ENCODE measurements at regions of chr19 and their contacts with region 1.

Region 1: GRCh38 chr19:8307965-8308866 is at the start of gene CD320:
- DNase-seq: peak; percentile 84
- H3K4me3 Mint-ChIP-seq: peak within 1 kb of the TSS; percentile 89
- H3K27ac Mint-ChIP-seq: peak within 1 kb of the TSS; percentile 81
- H3K4me1 Mint-ChIP-seq: peaks cover 31% of the 10 kb centered on the region
- H3K27me3 Mint-ChIP-seq: no peaks in the 10 kb centered on the region
- total RNA-seq, gene CD320: 122 and 126 TPM in 2 replicates

Region 2: DNA sequence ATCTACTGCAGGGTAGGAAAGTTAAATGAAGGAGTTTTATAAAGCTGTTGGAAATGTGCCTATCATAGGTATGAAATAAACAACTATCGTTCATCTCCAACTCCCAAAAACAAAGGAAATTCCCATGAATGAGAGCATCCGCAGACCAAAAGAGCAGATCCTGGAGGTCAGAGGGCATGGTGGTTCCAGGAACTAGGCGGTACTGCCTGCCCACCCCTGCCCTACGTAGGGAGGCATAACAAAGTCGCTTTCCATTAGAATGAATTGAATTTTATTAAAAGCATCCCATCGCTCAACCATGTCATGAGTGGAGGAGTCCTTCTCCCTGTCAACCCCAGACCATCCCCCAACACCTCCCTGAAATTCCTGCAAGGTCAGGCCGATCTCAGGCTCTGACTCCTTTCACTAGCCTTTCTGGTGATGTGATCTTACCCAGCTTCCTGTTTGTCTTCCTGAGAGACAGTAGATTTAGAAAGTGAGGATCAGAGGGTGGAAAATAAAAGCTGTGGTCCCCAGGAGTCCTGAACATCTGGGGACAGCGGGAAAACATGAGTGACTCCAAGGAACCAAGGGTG is 545.4 kb before region 1 on chr19 and contains the start of gene CLEC4M:
- intact Hi-C with region 1: no loop called
- DNase-seq: no peak
- H3K4me3 Mint-ChIP-seq: no peak within 1 kb of the TSS
- H3K27ac Mint-ChIP-seq: no peak within 1 kb of the TSS
- H3K4me1 Mint-ChIP-seq: no peaks in the 10 kb centered on the region
- H3K27me3 Mint-ChIP-seq: peaks cover 5% of the 10 kb centered on the region
- total RNA-seq, gene CLEC4M: not detected in 2 replicates

Region 3: GRCh38 chr19:8148410-8149231 is 159.6 kb before region 1 on chr19:
- intact Hi-C with region 1: no loop called
- DNase-seq: no peak
- H3K4me3 Mint-ChIP-seq: no peak overlapping the region
- H3K27ac Mint-ChIP-seq: no peak overlapping the region
- H3K4me1 Mint-ChIP-seq: no peaks in the 10 kb centered on the region
- H3K27me3 Mint-ChIP-seq: peaks cover 39% of the 10 kb centered on the region

Region 4: DNA sequence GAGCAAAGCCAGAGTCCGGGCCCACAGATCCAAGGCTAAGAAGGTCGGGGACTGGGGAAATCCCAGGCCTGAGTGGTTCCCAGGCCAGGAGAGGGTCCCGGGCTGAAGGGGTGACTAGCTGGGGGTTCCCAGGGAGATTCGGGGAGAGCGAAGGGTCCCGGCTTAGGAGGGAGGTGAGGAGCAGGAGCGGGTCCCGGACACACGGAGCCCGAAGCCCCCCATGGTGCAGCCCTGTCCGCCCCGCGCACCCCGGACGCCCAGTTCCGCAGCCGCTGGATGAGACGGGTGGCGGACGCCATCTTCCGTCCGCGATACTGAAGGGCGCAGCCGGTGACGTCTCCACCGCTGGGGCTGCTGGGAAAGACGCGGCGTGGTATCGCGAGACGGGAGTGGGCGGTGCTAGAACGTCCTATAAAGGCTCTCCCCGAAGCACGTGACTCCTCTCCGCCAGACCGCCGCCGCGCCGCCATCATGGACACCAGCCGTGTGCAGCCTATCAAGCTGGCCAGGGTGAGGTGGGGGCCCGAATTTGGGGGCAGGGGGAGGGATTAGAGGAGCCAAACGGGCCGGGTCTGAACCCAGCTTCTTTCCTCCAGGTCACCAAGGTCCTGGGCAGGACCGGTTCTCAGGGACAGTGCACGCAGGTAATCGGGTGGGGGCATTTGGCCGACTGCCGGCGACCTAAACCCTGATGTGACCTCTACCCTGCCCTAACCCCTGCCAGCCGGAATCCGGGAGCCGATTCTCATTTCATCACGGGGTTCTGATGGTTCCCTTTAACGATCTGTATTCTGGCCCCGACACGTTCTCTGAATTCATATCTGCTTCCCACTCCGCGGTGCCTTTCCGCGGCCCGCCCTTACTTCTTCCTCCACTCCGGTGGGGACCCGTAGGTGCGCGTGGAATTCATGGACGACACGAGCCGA is 13.1 kb after region 1 on chr19 and contains the starts of genes NDUFA7 and RPS28:
- intact Hi-C with region 1: loop called (anchors 1 kb)
- DNase-seq: peak; percentile 96
- H3K4me3 Mint-ChIP-seq: peak within 1 kb of the TSS; percentile 100
- H3K27ac Mint-ChIP-seq: peak within 1 kb of the TSS; percentile 99
- H3K4me1 Mint-ChIP-seq: peaks cover 31% of the 10 kb centered on the region
- H3K27me3 Mint-ChIP-seq: no peaks in the 10 kb centered on the region
- total RNA-seq, gene NDUFA7: 51.1 and 51.8 TPM in 2 replicates
- total RNA-seq, gene RPS28: 1,836 and 1,872 TPM in 2 replicates

Region 5: DNA sequence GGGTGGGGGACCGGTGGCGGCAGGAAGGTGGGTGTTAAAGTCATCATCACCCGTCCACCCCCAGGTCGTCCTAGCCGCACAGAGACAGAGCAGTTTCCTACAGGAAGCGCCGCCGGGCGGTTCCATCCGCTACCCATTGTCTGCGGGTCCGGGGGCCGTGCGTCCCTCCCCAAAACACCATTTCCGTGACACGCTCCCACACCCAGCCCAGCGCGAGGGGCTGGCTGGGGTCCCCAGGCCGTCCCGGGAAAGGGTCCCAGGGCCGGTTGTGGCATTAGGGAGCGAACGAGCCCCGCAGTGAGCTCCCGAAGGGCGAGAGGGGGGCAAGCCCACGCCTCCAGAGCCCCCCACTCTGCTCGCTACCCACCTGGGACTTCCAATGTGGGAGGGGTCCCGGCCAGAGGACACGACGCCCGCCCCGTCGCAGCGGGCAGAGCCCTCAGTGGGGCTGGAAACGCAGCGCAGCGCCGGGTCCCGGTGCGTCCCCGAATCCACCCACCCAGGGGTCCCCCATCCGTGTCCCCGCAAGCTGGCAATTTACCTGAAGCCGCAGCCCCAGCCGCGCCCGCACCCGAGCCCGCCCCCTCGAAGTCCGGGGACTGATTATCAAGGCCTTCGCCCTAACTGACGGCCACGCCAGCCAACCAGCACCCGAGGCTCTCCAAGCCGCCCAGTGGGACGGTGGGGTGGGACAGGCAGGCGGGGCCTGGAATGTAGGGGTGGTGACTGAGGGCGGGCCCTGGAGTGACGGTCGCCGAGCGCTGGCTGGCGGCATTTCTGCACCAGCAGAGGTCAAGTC is 34.7 kb after region 1 on chr19 and contains the start of gene KANK3:
- intact Hi-C with region 1: loop called (anchors 2 kb)
- DNase-seq: peak; percentile 86
- H3K4me3 Mint-ChIP-seq: peak within 1 kb of the TSS; percentile 79
- H3K27ac Mint-ChIP-seq: no peak within 1 kb of the TSS
- H3K4me1 Mint-ChIP-seq: peaks cover 5% of the 10 kb centered on the region
- H3K27me3 Mint-ChIP-seq: peaks cover 39% of the 10 kb centered on the region
- total RNA-seq, gene KANK3: 0.86 and 1.4 TPM in 2 replicates